ENCODE measurements at regions of chr1 and their contacts with region 1.

Region 1: GRCh38 chr1:112882271-112882744 is 73.7 kb downstream of the SLC16A1 start:
- DNase-seq: no peak
- CTCF ChIP-seq: no peak

Region 2: DNA sequence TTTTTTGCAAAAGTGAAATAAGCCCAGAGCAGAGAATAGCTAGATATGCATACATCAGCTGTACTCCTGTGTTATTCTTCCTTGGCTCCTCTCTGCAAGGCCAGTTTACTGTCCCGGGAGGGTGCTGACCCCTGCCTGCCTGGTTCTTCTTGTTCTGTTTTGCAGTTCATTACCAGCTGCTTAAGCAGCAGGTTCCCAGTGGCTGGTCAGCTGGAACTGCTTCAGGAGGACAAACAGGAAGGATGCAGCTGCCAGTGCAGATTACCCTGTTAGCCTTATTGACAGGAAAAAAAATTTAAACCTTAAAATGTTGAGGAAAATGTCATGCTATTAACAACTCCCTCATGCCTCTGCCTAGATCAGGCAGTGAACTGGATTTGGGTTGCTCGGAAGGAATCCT is 174.7 kb after region 1 on chr1:
- in situ Hi-C with region 1: loop called (anchors 10 kb)
- DNase-seq: no peak
- CTCF ChIP-seq: no peak

Measured in GM13977 (cell line).